Head of caudate nucleus (tissue), 42 donors: ENCODE measurements at regions of chr1 and their contacts with region 1.

Region 1: GRCh38 chr1:9867408-9868243 is 42.4 kb downstream of the CTNNBIP1 start:
- DNase-seq: peak; percentile 51 to 95 (median 87)

Region 2: GRCh38 chr1:9612871-9613624 is 254.6 kb before region 1 on chr1:
- intact Hi-C with region 1: no loop called
- DNase-seq: no peak

Region 3: DNA sequence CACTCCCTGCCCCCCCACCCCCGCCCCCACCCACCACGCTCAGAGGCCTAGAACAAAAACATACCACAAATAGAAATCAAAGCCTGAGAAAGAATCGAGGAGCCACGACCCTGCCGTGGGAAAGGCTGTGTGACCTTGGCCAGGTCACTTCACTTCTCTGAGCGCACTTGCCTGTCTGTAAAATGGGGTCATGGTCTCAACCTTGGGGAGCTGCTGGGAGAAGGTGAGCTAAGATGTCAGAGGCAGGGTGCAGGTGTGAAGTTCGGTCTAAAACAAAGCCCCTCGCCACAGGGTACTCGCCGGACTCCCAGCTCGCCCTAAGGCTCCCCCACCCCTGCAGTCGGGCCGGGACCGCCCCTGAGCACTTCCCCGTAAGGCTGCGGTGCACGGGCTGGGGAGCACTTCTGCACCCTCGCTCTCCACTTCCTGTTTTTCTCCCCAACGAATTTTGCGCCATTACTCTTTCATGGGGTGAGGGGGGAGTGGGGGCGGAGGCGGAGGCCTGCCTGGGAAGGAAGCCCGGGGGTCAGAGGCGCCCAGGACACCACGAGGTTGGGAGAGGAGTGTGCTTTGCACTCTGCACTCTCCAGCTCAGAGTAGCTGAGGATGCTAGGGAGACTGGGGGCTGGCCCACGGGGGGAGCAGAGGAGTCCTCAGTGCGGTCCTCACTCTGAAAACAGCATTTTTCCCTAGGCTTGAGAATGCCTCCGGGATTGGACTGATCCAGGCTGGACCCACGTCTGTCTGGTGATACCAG is 238.0 kb before region 1 on chr1:
- intact Hi-C with region 1: loop called (anchors 10 kb)
- DNase-seq: peak in 27 of 42 donors; percentile 2 to 58 (median 35)

Region 4: DNA sequence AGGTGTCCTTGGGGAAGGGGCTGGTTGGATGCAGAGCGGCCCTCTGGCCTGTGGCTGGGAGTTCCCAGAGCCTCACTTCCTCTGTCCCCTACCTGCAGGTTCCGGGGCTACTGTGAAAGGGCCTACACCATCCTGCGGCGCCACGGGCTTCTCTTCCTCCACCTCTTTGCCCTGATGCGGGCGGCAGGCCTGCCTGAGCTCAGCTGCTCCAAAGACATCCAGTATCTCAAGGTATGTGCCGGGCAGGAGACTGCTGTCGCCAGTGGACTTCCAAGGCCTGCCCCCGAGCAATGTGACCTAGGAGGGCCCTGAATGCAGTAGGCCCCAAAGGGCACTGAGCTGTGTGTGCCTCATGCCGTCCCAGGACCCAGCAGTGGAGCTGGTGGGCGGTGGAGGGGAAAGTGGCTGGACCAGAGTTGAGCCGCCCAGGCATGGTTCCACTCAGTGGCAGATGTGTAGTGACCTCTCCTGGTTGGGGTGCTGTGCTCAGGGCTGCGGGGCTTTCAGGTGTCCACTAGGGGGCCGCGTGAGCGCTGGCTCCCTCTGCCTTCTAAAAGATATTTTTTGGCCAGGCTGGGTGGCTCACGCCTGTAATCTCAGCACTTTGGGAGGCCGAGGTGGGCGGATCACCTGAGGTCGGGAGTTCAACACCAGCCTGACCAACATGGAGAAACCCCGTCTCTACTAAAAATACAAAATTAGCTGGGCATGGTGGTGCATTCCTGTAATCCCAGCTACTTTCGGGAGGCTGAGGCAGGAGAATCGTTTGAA is 142.7 kb before region 1 on chr1:
- intact Hi-C with region 1: loop called (anchors 5 kb)
- DNase-seq: peak in 38 of 42 donors; percentile 16 to 77 (median 50)

Region 5: GRCh38 chr1:9784508-9785133 is 83.0 kb before region 1 on chr1:
- intact Hi-C with region 1: loop called (anchors 10 kb)
- DNase-seq: peak in 21 of 42 donors; percentile 25 to 73 (median 40)